ENCODE measurements at regions of chr14 and their contacts with region 1.

Region 1: GRCh38 chr14:103500148-103500990 is 22.3 kb downstream of the CKB start:
- DNase-seq: peak; percentile 87 to 90
- ATAC-seq: peak; percentile 74 to 95 (median 90)
- H3K4me3 ChIP-seq: no peak overlapping the region
- H3K27ac ChIP-seq: peak overlapping the region in 5 of 10 donors; percentile 5 to 61 (median 41)
- H3K4me1 ChIP-seq: peaks cover 8 to 32% (median 14%) of the 10 kb centered on the region in 9 donors
- H3K27me3 ChIP-seq: no peaks in the 10 kb centered on the region
- CTCF ChIP-seq: peak; percentile 88 to 99 (median 94)

Region 2: GRCh38 chr14:103552011-103552845 is 51.9 kb after region 1 on chr14:
- intact Hi-C with region 1: loop called in 7 of 10 experiments (anchors 5 kb)
- DNase-seq: peak in 1 of 2 donors; percentile 49
- ATAC-seq: peak; percentile 12 to 63 (median 50)
- H3K4me3 ChIP-seq: peak overlapping the region in 5 of 10 donors; percentile 2 to 40 (median 30)
- H3K27ac ChIP-seq: peak overlapping the region; percentile 63 to 95 (median 88)
- H3K4me1 ChIP-seq: peaks cover 24 to 91% (median 63%) of the 10 kb centered on the region in 9 donors
- H3K27me3 ChIP-seq: no peaks in the 10 kb centered on the region
- CTCF ChIP-seq: no peak

Measured in heart right ventricle (tissue), 16 donors.